ENCODE measurements at regions of chr3 and their contacts with region 1.

Region 1: GRCh38 chr3:50179710-50180109 is 11.7 kb upstream of the GNAT1 start:
- DNase-seq: no peak
- ATAC-seq: no peak
- H3K4me3 ChIP-seq: no peak overlapping the region
- H3K4me3 Mint-ChIP-seq: no peak overlapping the region
- H3K27ac ChIP-seq: no peak overlapping the region
- H3K27ac Mint-ChIP-seq: no peak overlapping the region
- H3K4me1 ChIP-seq: no peaks in the 10 kb centered on the region
- H3K4me1 Mint-ChIP-seq: no peaks in the 10 kb centered on the region
- H3K27me3 ChIP-seq: no peaks in the 10 kb centered on the region
- H3K27me3 Mint-ChIP-seq: no peaks in the 10 kb centered on the region
- CTCF ChIP-seq: no peak

Region 2: DNA sequence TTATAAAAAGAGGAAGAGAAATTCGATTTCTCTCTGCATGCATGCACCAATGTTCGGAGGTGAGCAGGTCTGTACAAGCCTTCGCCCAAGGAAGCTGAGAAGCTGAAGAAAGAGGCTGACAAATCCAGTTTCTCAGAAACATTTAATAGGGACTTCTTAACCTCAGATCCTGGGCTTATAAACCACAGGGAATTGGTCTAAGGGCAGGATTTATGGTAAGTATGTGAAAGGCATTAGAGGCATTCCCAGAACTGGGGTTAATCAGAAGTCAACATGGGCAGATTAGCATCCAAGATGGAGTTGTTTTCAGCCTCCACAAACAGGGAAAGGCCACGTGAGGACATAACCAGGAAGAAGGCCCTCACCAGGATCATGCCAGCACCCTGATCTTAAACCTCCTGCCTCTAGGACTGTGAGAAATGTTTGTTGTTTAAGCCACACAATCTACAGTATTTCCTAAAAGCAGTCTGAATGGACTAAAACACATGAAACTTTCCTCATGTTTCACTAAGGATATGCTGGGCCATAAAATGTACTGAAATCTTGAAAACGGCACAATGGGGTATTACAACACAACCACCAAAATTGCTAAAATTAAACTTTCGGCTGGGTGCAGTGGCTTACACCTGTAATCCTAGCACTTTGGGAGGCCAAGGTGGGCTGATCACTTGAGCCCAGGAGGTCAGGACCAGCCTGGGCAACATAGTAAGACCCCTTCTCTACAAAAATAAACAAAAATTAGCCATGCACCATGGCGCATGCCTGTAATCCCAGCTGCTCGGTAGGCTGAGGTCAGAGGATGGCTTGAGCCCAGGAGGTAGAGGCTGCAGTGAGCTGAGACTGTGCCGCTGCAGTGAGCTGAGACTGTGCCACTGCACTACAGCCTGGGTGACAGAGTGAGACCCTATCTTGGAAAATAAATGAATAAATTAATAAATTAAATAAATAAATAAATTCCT is 1686.9 kb before region 1 on chr3:
- CTCF ChIA-PET with region 1: no interaction called
- POLR2A ChIA-PET with region 1: interaction called, 10 read pairs
- intact Hi-C with region 1: no loop called
- DNase-seq: no peak
- ATAC-seq: peak; percentile 95
- H3K4me3 ChIP-seq: no peak overlapping the region
- H3K4me3 Mint-ChIP-seq: peak overlapping the region; percentile 14
- H3K27ac ChIP-seq: no peak overlapping the region
- H3K27ac Mint-ChIP-seq: peak overlapping the region; percentile 22
- H3K4me1 ChIP-seq: peaks cover 0 to 12% of the 10 kb centered on the region in 2 donors
- H3K4me1 Mint-ChIP-seq: peaks cover 15% of the 10 kb centered on the region
- H3K27me3 ChIP-seq: no peaks in the 10 kb centered on the region
- H3K27me3 Mint-ChIP-seq: no peaks in the 10 kb centered on the region
- CTCF ChIP-seq: no peak

Region 3: DNA sequence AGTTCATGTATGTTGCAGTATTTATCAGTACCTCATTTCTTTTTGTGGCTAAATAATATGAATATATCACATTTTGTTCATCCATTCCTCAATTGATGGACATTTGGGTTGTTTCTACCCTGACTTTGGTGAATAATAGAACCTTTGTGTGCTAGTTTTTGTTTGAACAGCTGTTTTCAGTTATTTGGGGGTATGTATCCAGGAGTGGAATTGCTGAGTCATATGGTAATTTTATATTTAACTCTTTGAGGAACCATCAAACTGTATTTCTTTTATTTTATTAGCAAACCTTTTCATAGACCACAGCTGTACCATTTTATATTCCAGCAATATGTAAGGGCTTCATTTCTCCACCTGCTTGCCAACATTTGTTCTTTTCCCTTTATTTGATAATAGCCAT is 129.3 kb before region 1 on chr3:
- CTCF ChIA-PET with region 1: no interaction called
- POLR2A ChIA-PET with region 1: no interaction called
- intact Hi-C with region 1: no loop called
- DNase-seq: no peak
- ATAC-seq: no peak
- H3K4me3 ChIP-seq: no peak overlapping the region
- H3K4me3 Mint-ChIP-seq: no peak overlapping the region
- H3K27ac ChIP-seq: no peak overlapping the region
- H3K27ac Mint-ChIP-seq: no peak overlapping the region
- H3K4me1 ChIP-seq: no peaks in the 10 kb centered on the region
- H3K4me1 Mint-ChIP-seq: no peaks in the 10 kb centered on the region
- H3K27me3 ChIP-seq: no peaks in the 10 kb centered on the region
- H3K27me3 Mint-ChIP-seq: no peaks in the 10 kb centered on the region
- CTCF ChIP-seq: no peak

Region 4: DNA sequence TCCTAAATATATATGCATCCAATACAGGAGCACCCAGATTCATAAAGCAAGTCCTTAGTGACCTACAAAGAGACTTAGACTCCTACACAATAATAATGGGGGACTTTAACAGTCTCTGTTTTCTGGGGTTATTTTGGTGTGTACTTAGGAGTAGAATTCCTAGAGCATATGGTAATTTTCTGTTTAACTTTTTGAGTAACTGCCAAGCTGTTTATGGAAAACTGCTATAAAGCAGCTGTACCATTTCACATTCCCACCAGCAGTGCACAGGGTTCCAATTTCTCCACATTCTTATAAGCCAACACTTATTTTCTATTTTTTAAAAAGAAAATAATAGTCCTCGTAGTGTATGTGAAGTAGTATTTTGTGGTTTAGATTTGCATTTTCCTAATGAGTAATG is 563.9 kb after region 1 on chr3:
- CTCF ChIA-PET with region 1: no interaction called
- POLR2A ChIA-PET with region 1: no interaction called
- intact Hi-C with region 1: no loop called
- DNase-seq: no peak
- ATAC-seq: no peak
- H3K4me3 ChIP-seq: no peak overlapping the region
- H3K4me3 Mint-ChIP-seq: no peak overlapping the region
- H3K27ac ChIP-seq: no peak overlapping the region
- H3K27ac Mint-ChIP-seq: no peak overlapping the region
- H3K4me1 ChIP-seq: no peaks in the 10 kb centered on the region
- H3K4me1 Mint-ChIP-seq: no peaks in the 10 kb centered on the region
- H3K27me3 ChIP-seq: no peaks in the 10 kb centered on the region
- H3K27me3 Mint-ChIP-seq: peaks cover 16% of the 10 kb centered on the region
- CTCF ChIP-seq: no peak

Measured in B cell (primary cell).